Calu3 (cell line): ENCODE measurements at regions of chr14 and their contacts with region 1.

Region 1: GRCh38 chr14:57486767-57487379 is 6.8 kb downstream of the CCDC198 start:
- DNase-seq: peak; percentile 17
- H3K4me3 Mint-ChIP-seq: no peak overlapping the region
- H3K27ac Mint-ChIP-seq: no peak overlapping the region
- H3K4me1 Mint-ChIP-seq: peaks cover 7% of the 10 kb centered on the region
- H3K27me3 Mint-ChIP-seq: no peaks in the 10 kb centered on the region
- CTCF ChIP-seq: peak; percentile 52

Region 2: GRCh38 chr14:57574617-57575303 is 87.9 kb after region 1 on chr14:
- CTCF ChIA-PET with region 1: interaction called, 9 read pairs
- intact Hi-C with region 1: loop called (anchors 1 kb)
- DNase-seq: peak; percentile 34
- H3K4me3 Mint-ChIP-seq: no peak overlapping the region
- H3K27ac Mint-ChIP-seq: no peak overlapping the region
- H3K4me1 Mint-ChIP-seq: no peaks in the 10 kb centered on the region
- H3K27me3 Mint-ChIP-seq: no peaks in the 10 kb centered on the region
- CTCF ChIP-seq: no peak

Region 3: DNA sequence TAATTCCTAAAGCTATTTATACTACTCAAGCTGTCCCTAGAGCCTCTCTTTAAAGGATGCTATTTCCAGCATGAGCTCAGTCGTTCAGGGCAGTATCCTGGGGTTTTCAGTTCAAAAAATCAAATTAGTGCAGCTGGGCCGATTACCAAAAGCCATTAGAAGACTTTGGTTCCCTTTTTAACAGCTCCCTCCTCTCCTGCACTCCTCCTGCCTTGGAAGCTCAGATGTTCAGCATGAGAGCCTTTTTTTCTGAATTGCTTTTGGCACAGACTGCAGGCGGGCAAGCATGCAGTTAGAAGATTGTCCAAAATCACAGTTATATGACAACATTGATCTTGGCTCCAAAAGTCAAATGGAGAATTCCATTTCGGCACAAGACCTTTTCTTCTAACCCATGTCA is 199.4 kb after region 1 on chr14:
- CTCF ChIA-PET with region 1: no interaction called
- intact Hi-C with region 1: loop called (anchors 5 kb)
- DNase-seq: no peak
- H3K4me3 Mint-ChIP-seq: no peak overlapping the region
- H3K27ac Mint-ChIP-seq: no peak overlapping the region
- H3K4me1 Mint-ChIP-seq: no peaks in the 10 kb centered on the region
- H3K27me3 Mint-ChIP-seq: peaks cover 27% of the 10 kb centered on the region
- CTCF ChIP-seq: no peak

Region 4: GRCh38 chr14:57871459-57872080 is 384.7 kb after region 1 on chr14:
- CTCF ChIA-PET with region 1: no interaction called
- intact Hi-C with region 1: loop called (anchors 2 kb)
- DNase-seq: peak; percentile 57
- H3K4me3 Mint-ChIP-seq: no peak overlapping the region
- H3K27ac Mint-ChIP-seq: no peak overlapping the region
- H3K4me1 Mint-ChIP-seq: peaks cover 9% of the 10 kb centered on the region
- H3K27me3 Mint-ChIP-seq: peaks cover 30% of the 10 kb centered on the region
- CTCF ChIP-seq: peak; percentile 59

Region 5: DNA sequence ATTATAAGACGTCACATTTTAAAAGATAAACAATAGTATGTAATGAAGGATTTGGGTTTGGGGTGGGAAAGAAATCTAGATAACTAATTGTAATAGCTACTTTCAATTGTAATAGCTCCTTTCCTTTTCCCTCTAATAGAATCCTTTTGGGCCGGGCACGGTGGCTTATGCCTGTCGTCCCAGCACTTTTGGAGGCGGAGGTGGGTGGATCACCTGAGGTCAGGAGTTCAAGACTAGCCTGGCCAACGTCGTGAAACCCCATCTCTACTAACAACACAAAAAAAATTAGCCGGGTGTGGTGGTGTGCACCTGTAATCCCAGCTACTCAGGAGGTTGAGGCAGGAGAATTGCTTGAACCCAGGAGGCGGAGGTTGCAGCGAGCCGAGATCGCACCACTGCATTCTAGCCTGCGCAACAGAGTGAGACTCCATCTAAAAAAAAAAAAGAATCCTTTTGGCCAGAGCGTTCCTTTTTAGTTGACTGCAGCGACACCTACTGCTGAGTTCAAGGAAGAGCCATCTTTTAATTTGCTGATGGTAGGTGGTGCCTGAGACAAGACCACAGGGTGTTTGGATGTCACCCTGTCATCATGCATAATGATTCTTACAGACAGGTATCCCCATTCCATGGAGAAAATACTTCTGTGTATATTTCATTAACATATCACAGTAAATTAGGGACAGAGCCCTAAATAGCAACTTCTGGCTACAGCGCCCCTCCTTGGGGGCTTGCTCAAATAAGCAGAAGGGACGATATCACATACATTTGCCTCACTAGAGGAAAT is 585.6 kb after region 1 on chr14:
- CTCF ChIA-PET with region 1: no interaction called
- intact Hi-C with region 1: loop called (anchors 2 kb)
- DNase-seq: peak; percentile 63
- H3K4me3 Mint-ChIP-seq: no peak overlapping the region
- H3K27ac Mint-ChIP-seq: no peak overlapping the region
- H3K4me1 Mint-ChIP-seq: no peaks in the 10 kb centered on the region
- H3K27me3 Mint-ChIP-seq: peaks cover 24% of the 10 kb centered on the region
- CTCF ChIP-seq: peak; percentile 30